AG04450 (cell line): ENCODE measurements at regions of chr7 and their contacts with region 1.

Region 1: DNA sequence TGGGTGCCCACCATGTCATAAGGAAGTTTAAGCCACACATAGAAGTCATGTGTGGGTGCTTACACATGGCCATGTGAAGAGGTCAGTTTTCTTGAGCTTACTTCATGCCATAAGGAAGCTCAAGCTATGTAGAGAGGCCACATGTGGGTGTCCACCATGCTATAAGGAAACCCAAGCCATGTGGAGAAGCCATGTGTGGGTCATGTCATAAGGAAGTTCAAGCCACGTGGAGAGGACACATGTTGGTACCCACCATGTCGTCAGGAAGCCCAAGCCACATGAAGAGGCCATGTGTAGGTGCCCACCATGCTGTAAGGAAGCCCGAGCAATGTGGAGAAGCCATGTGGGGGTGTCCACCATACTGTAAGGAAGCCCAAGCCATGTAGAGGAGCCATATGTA is 1089.2 kb upstream of the AUTS2 start:
- DNase-seq: no peak
- H3K4me3 ChIP-seq: no peak overlapping the region
- H3K27ac ChIP-seq: no peak overlapping the region
- H3K27me3 ChIP-seq: no peaks in the 10 kb centered on the region
- CTCF ChIP-seq: no peak

Region 2: DNA sequence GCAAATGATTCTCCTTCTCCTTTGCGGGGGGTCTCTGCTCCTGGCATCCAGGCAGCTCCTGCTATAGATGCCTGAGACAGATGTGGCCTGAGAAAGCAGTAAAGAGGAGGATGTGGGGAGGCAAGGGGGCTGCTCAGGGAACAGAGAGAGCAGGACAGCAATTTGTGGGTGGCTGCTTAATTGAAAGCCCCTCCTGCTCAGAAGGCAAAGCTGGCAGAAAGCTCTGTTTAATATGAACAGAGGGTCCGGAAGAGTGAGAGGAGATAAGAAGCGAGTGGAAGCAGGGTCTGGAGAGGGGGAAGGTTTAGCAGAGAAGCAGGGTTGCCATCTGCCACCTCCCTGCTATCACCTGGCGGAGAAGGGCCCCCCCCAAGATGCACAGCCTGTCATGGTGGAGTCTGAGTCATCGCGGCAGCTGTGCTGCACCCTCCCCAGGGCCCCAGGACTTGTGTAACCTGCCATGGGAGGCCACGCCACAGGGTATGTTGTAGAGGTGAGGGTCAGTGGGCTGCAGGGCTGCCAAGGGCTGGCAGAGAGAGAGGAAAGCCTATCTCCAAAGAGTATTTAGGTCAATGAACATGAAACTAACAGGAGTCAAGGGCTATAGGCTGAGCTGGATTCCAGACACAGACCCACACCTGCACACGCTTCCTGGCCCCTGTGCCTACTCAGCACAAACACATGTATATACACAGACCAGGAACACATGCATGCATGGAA is 20.6 kb before region 1 on chr7:
- CTCF ChIA-PET with region 1: no interaction called
- POLR2A ChIA-PET with region 1: no interaction called
- DNase-seq: no peak
- H3K4me3 ChIP-seq: no peak overlapping the region
- H3K27ac ChIP-seq: no peak overlapping the region
- H3K27me3 ChIP-seq: no peaks in the 10 kb centered on the region
- CTCF ChIP-seq: no peak

Region 3: DNA sequence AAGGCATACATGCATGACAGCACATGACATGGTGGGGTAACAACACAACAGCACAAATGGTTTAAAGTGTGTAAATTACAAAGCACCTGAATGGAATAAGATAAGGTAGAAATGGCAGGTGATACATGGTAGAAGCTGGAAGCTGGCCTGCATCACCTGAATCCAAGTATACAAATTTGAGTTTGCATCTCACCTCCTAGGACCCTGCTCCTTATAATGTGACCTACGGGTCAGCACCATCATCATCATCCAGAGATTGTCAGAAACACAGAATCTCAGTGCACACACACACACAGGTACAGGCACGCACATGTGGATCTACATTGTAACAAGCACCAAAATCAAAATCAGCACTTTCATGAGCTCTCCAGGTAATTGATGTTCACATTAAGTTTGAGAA is 41.0 kb after region 1 on chr7:
- CTCF ChIA-PET with region 1: no interaction called
- POLR2A ChIA-PET with region 1: no interaction called
- DNase-seq: no peak
- H3K4me3 ChIP-seq: no peak overlapping the region
- H3K27ac ChIP-seq: no peak overlapping the region
- H3K27me3 ChIP-seq: no peaks in the 10 kb centered on the region
- CTCF ChIP-seq: no peak

Region 4: GRCh38 chr7:68619526-68619925 is 110.5 kb after region 1 on chr7:
- CTCF ChIA-PET with region 1: no interaction called
- POLR2A ChIA-PET with region 1: no interaction called
- DNase-seq: no peak
- H3K4me3 ChIP-seq: no peak overlapping the region
- H3K27ac ChIP-seq: no peak overlapping the region
- H3K27me3 ChIP-seq: no peaks in the 10 kb centered on the region
- CTCF ChIP-seq: no peak

Region 5: DNA sequence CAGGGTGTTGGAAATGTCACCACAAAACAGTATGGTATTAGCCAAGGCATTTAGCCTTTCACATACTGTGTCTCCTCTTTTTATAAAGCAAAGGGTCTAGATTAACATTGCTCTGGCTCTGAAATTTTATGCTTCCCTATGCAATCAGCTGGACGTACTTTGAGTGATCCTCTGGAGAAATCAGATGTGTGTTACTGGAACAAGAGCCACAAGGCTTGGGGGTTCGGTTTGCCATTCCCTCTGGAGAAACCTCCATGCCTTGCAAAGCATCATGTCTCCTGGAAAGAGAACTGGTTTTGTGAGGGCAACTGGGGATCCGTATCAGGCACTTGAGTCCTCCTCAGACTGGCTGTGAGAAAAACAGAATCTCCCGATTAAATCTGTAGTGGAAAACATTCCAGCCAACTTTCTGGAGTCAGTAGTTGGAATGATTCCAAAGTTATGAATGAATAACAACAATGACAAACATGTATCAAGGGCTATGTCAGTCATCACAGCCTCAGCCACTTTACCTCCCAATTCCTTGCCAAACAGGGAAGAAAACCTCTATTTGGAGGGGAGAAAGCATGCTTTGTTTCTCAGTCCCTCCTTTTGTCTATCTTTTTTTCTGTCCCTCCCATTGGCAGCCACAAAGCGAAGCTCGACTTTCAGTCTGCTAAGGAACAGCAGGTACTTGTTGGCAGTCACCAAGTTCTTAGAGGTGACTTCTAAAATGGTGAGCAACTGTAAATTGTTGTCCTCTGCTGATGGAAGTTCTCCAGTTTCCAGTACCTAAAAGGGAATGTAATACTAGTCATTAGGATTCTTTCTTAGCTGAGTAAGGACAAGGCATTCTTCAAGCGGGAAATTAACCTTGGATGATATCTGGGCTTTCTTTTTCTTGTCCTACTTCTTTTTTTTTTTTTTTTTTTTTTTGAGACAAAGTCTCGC is 224.4 kb after region 1 on chr7:
- CTCF ChIA-PET with region 1: no interaction called
- POLR2A ChIA-PET with region 1: interaction called, 11 read pairs
- DNase-seq: no peak
- H3K4me3 ChIP-seq: no peak overlapping the region
- H3K27ac ChIP-seq: no peak overlapping the region
- H3K27me3 ChIP-seq: no peaks in the 10 kb centered on the region
- CTCF ChIP-seq: no peak